ENCODE measurements at regions of chr11 and their contacts with region 1.

Region 1: DNA sequence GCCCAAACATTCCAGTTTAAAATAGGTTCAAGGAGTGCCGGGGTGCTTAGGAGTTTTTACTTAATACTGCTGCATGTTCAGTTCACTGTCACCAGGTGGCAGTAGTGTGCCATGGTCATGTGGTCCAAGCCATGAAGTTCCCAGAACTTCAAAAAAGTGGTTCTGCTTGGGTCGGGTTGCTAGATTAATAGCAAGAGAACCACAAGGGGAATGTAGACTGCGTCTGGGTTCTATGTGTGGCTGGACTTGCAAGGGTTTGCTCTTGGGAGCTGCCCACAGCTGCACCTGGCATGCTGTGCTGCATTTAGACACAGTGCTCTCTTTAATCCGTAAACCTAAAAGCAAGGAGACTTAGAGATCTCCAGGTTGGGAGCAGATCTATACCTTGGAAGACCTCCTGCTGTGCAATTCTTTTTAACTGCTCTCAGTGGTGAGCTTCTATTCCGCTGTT is 6.5 kb upstream of the SPON1 start:
- DNase-seq: peak in 4 of 5 donors; percentile 41 to 57 (median 50)
- ATAC-seq: peak in 3 of 4 donors; percentile 44 to 84 (median 62)
- H3K4me3 ChIP-seq: no peak overlapping the region
- H3K27ac ChIP-seq: no peak overlapping the region
- H3K4me1 ChIP-seq: peaks cover 0 to 5% (median 0%) of the 10 kb centered on the region in 12 donors
- H3K27me3 ChIP-seq: peaks cover 0 to 62% (median 11%) of the 10 kb centered on the region in 9 donors
- CTCF ChIP-seq: peak; percentile 80 to 90 (median 85)
- POLR2A ChIP-seq: no peak

Region 2: GRCh38 chr11:14082338-14082737 is 126.3 kb after region 1 on chr11:
- intact Hi-C with region 1: loop called in 1 of 10 experiments (anchors 10 kb)
- DNase-seq: peak in 1 of 5 donors; percentile 20
- ATAC-seq: peak; percentile 86 to 95 (median 93)
- H3K4me3 ChIP-seq: no peak overlapping the region
- H3K27ac ChIP-seq: peak overlapping the region in 8 of 12 donors; percentile 7 to 63 (median 51)
- H3K4me1 ChIP-seq: peaks cover 0 to 22% (median 0%) of the 10 kb centered on the region in 12 donors
- H3K27me3 ChIP-seq: peaks cover 0 to 14% (median 0%) of the 10 kb centered on the region in 9 donors
- CTCF ChIP-seq: no peak
- POLR2A ChIP-seq: no peak

Region 3: GRCh38 chr11:14249121-14249963 is 293.3 kb after region 1 on chr11:
- intact Hi-C with region 1: loop called (anchors 1 to 2 kb)
- DNase-seq: peak in 4 of 5 donors; percentile 37 to 75 (median 53)
- ATAC-seq: peak in 3 of 4 donors; percentile 49 to 64 (median 51)
- H3K4me3 ChIP-seq: no peak overlapping the region
- H3K27ac ChIP-seq: no peak overlapping the region
- H3K4me1 ChIP-seq: peaks cover 0 to 20% (median 2%) of the 10 kb centered on the region in 12 donors
- H3K27me3 ChIP-seq: peaks cover 0 to 43% (median 2%) of the 10 kb centered on the region in 9 donors
- CTCF ChIP-seq: peak; percentile 80 to 93 (median 90)
- POLR2A ChIP-seq: no peak